ENCODE measurements at regions of chr4 and their contacts with region 1.

Region 1: GRCh38 chr4:87926554-87927098 is 48.9 kb upstream of the SPP1 start:
- DNase-seq: no peak
- H3K4me3 ChIP-seq: no peak overlapping the region
- H3K27ac ChIP-seq: no peak overlapping the region
- H3K4me1 ChIP-seq: no peaks in the 10 kb centered on the region
- H3K27me3 ChIP-seq: no peaks in the 10 kb centered on the region
- CTCF ChIP-seq: no peak

Region 2: GRCh38 chr4:87938746-87939145 is 12.1 kb after region 1 on chr4:
- CTCF ChIA-PET with region 1: no interaction called
- POLR2A ChIA-PET with region 1: no interaction called
- intact Hi-C with region 1: loop called (anchors 1 kb)
- DNase-seq: no peak
- H3K4me3 ChIP-seq: no peak overlapping the region
- H3K27ac ChIP-seq: no peak overlapping the region
- H3K4me1 ChIP-seq: no peaks in the 10 kb centered on the region
- H3K27me3 ChIP-seq: no peaks in the 10 kb centered on the region
- CTCF ChIP-seq: no peak

Measured in A673 (cell line).